ENCODE measurements at regions of chr7 and their contacts with region 1.

Region 1: DNA sequence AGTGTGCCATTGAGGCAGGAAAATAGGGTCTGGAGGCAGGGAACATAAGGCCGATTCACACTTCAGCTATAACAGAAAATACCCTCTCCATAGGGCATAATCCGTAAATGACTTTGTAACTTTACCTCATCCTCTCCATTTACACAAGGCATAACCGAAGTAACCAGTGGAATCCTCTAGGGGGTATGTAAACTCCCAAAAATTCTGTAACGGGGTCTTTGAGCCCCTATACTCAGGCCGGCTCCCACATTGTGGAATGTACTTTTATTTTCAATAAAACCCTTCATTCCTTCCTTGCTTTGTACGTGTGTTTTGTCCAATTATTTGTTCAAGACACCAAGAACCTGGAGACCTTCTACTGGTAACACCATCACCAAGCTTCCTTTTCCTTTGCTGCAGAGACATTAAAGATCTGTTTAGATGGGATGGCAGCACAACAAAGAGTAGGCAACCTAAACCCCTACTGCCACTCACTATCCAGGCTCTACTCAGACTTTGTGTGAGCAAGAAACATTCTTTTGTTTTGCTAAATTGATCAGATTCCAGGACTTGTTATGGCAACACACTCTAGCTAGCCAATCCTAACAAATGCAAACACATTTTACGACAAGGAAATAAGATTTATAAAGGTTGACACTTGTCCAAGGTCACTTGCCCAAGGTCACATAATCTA is 99.3 kb downstream of the DGKI start:
- DNase-seq: no peak
- ATAC-seq: no peak
- H3K4me3 ChIP-seq: no peak overlapping the region
- H3K27ac ChIP-seq: no peak overlapping the region
- H3K4me1 ChIP-seq: no peaks in the 10 kb centered on the region
- H3K27me3 ChIP-seq: no peaks in the 10 kb centered on the region
- CTCF ChIP-seq: no peak
- POLR2A ChIP-seq: no peak

Region 2: DNA sequence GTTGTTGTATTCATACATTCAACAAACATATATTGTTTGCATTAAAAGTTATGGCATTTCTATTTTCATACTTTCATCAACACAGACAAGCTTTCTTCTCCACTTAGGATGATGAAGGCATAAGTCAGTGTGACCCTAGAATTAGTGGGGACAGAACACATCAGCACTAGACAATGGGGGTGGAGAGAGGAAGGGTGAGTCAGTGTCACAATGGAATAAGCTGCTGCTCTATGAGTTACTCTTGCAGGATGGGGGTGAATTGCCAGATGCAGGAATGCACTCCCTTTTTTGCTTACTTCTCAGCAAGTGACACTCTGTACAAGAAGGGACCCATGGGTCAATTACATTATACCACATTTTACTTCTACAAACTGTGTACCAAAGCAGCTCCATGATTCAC is 25.3 kb after region 1 on chr7:
- intact Hi-C with region 1: loop called in 1 of 10 experiments (anchors 2 kb)
- DNase-seq: no peak
- ATAC-seq: peak in 3 of 4 donors; percentile 36 to 65 (median 53)
- H3K4me3 ChIP-seq: no peak overlapping the region
- H3K27ac ChIP-seq: no peak overlapping the region
- H3K4me1 ChIP-seq: peaks cover 0 to 9% (median 0%) of the 10 kb centered on the region in 12 donors
- H3K27me3 ChIP-seq: no peaks in the 10 kb centered on the region
- CTCF ChIP-seq: no peak
- POLR2A ChIP-seq: no peak

Region 3: GRCh38 chr7:137801003-137801402 is 53.5 kb after region 1 on chr7:
- intact Hi-C with region 1: no loop called
- DNase-seq: no peak
- ATAC-seq: no peak
- H3K4me3 ChIP-seq: no peak overlapping the region
- H3K27ac ChIP-seq: no peak overlapping the region
- H3K4me1 ChIP-seq: no peaks in the 10 kb centered on the region
- H3K27me3 ChIP-seq: no peaks in the 10 kb centered on the region
- CTCF ChIP-seq: no peak
- POLR2A ChIP-seq: no peak